ENCODE measurements at regions of chr19 and their contacts with region 1.

Region 1: DNA sequence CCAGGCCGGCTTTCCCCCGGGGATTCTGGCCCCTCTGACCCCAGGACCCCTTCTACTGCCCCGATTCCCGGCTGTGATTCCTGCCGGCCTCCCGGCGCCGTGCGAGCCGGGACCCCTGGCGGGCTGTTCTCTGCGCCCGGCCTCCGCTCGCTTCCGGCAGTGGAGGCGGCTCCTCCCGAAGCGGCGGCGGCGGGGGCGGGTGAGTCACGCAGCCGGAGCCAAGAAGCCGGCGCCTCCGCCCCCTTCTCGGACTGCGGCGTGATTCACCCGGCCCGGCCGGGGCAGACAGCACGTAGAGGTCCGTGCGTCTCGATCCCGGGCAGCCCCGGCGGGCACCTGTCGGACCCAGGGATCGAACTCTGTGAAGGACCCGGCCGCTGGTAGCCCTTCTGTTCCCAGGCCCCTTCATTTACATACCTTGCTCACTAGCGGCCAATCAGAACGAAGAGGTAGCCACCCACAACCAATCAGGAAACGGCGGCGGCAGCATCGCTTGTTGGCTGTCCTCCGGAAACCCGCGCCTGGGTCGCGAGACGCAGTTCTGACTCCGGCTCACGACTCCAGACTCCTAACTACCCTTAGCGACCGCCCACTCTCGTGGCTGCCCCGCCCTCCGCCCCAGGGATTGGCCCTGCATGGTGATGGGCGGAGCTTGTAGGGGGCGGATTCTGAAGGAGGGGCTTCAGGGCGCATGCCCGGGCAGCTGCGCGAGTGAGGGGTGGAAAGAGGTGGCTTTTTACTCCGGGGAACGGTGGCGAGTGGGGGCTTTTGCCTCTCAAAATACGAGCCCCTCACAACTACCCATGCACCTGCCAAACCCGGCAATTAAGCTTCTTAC is at the start of gene SERTAD1:
- DNase-seq: peak; percentile 100
- H3K4me3 Mint-ChIP-seq: peak within 1 kb of the TSS; percentile 89
- H3K27ac Mint-ChIP-seq: peak within 1 kb of the TSS; percentile 97
- H3K4me1 Mint-ChIP-seq: peaks cover 21% of the 10 kb centered on the region
- H3K27me3 Mint-ChIP-seq: no peaks in the 10 kb centered on the region
- total RNA-seq, gene SERTAD1: 8.8 to 9.2 TPM

Region 2: GRCh38 chr19:40348125-40348913 is 77.3 kb before region 1 on chr19 and contains the starts of genes C19orf47 and PLD3:
- CTCF ChIA-PET with region 1: interaction called, 5 read pairs
- intact Hi-C with region 1: loop called (anchors 1 kb)
- DNase-seq: peak; percentile 99
- H3K4me3 Mint-ChIP-seq: peak within 1 kb of the TSS; percentile 89
- H3K27ac Mint-ChIP-seq: peak within 1 kb of the TSS; percentile 78
- H3K4me1 Mint-ChIP-seq: peaks cover 29% of the 10 kb centered on the region
- H3K27me3 Mint-ChIP-seq: no peaks in the 10 kb centered on the region
- total RNA-seq, gene C19orf47: 13.5 to 14.6 TPM
- total RNA-seq, gene PLD3: 57.6 to 58.2 TPM

Region 3: GRCh38 chr19:40403262-40403984 is 22.2 kb before region 1 on chr19:
- CTCF ChIA-PET with region 1: interaction called, 10 read pairs
- intact Hi-C with region 1: loop called (anchors 1 kb)
- DNase-seq: peak; percentile 91
- H3K4me3 Mint-ChIP-seq: peak overlapping the region; percentile 83
- H3K27ac Mint-ChIP-seq: peak overlapping the region; percentile 65
- H3K4me1 Mint-ChIP-seq: peaks cover 13% of the 10 kb centered on the region
- H3K27me3 Mint-ChIP-seq: no peaks in the 10 kb centered on the region

Region 4: GRCh38 chr19:40465557-40466150 is 40.0 kb after region 1 on chr19 and contains the start of gene BLVRB:
- CTCF ChIA-PET with region 1: interaction called, 8 read pairs
- intact Hi-C with region 1: loop called (anchors 1 kb)
- DNase-seq: peak; percentile 100
- H3K4me3 Mint-ChIP-seq: peak within 1 kb of the TSS; percentile 78
- H3K27ac Mint-ChIP-seq: peak within 1 kb of the TSS; percentile 50
- H3K4me1 Mint-ChIP-seq: peaks cover 26% of the 10 kb centered on the region
- H3K27me3 Mint-ChIP-seq: peaks cover 10% of the 10 kb centered on the region
- total RNA-seq, gene BLVRB: 29.4 to 30.2 TPM